Posterior vena cava (tissue), 2 donors: ENCODE measurements at regions of chr1 and their contacts with region 1.

Region 1: DNA sequence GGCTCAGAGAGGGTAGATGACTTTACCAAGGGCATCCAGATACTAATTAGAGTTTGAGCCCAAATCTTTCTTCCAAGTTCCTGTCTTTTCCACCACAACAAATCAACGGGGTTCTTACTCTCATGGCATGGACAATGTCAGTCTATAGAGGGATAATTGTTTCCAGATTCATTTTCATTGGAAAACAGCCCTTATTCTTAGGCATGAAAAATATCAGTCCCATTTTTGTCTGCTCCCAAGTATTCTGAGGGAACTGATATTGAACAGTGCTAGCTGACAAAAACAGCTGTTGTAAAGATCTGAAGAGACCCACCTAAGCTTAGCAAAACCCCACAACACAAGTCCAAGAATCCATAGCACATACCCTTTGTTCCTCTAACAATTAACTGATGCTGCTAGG is 349.1 kb upstream of the BEND5 start:
- DNase-seq: no peak

Region 2: DNA sequence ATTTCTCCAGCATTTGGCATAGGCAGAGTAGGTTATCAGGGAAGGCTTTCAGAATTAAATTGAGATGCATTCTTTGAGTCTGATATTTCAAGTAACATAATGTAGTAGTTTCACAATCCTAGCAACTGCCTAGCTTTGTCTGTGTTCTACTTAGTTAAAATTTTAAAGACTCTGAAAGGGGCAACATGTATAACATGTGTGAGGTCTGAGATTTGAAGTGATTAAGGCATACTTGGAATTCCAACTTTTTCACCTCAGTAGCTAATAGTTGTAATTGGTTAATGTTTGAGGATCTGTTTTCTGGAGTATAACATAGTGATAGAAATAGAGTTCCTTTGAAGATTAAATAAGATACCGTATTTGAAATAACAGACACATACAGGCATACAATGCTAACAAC is 13.8 kb before region 1 on chr1:
- intact Hi-C with region 1: loop called in 1 of 2 experiments (anchors 1 kb)
- DNase-seq: no peak